CD4-positive, alpha-beta memory T cell (primary cell): ENCODE measurements at regions of chr7 and their contacts with region 1.

Region 1: GRCh38 chr7:155205368-155206317 is 92.0 kb upstream of the INSIG1 start:
- DNase-seq: peak; percentile 88 to 97 (median 90)
- H3K4me3 ChIP-seq: peak overlapping the region; percentile 66 to 89
- H3K4me3 Mint-ChIP-seq: peak overlapping the region; percentile 83 to 93 (median 88)
- H3K27ac ChIP-seq: peak overlapping the region; percentile 77
- H3K27ac Mint-ChIP-seq: peak overlapping the region; percentile 92 to 99 (median 96)
- H3K4me1 ChIP-seq: peaks cover 15% of the 10 kb centered on the region
- H3K4me1 Mint-ChIP-seq: peaks cover 15 to 27% (median 22%) of the 10 kb centered on the region in 4 donors
- H3K27me3 ChIP-seq: no peaks in the 10 kb centered on the region
- H3K27me3 Mint-ChIP-seq: no peaks in the 10 kb centered on the region

Region 2: DNA sequence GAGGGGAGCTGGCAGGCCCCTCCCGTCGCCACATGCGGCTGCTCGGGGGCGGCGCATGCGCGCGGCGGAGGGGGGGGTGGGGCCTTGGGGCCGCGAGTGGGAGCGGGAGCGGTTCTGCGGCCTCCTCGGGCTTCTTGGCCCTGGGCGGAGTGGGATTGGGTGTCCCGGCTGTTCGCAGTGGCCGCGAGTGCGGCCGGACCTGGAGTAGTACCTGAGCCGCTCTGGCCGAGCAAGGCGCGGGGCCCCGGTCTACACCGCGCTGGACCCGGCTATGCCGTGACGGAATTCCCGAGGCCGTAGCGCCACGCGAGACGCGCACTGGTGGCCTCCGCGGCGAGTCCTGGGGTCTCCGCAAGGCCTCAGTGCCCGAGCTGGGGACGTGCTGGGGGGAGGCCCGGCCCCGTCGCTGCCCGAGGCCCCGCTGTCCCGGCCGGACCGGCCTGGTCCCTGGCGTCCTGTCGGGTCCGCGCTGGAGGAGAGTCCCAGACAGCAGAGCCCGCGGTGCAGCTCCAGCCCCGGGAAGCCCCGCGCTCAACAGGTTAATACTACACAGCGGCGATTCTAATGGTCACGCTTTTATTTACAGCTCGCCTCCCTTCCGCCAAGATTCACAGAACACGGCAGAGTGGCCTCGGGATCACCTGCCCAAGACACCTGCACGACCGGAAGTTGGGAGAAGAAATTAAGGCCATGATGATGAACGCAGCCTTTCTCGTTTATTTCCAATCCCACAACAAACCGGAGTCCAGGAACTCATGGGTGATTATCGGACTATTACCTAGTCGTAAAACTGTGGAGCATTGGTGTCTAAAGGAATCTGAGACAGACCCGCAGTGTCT is 202.0 kb before region 1 on chr7:
- CTCF ChIA-PET with region 1: no interaction called
- POLR2A ChIA-PET with region 1: interaction called, 21 read pairs
- intact Hi-C with region 1: loop called (anchors 1 kb)
- DNase-seq: peak; percentile 80 to 92 (median 88)
- H3K4me3 ChIP-seq: peak overlapping the region; percentile 81 to 91
- H3K4me3 Mint-ChIP-seq: peak overlapping the region; percentile 93 to 97 (median 95)
- H3K27ac ChIP-seq: peak overlapping the region; percentile 84
- H3K27ac Mint-ChIP-seq: peak overlapping the region; percentile 38 to 96 (median 95)
- H3K4me1 ChIP-seq: peaks cover 19% of the 10 kb centered on the region
- H3K4me1 Mint-ChIP-seq: peaks cover 8 to 16% (median 12%) of the 10 kb centered on the region in 4 donors
- H3K27me3 ChIP-seq: no peaks in the 10 kb centered on the region
- H3K27me3 Mint-ChIP-seq: no peaks in the 10 kb centered on the region

Region 3: DNA sequence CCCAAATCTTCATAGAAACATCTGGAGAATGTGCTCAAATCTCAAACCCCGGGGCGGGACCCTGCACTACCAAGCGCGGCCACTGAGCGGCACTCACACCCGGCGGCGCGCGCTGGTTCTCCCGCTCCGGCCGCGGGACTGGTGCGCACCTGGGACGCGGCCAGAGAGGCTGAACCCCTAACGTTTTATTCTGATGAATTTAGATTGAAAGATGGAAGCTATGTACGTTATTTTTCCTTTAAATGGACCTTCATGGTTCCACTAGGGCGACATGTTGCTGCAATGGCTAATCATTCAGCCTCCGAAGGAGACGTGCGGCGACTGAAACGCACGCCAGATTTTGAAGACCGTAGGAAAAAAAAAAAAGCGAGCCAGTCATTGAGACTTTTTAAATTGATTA is 15.0 kb before region 1 on chr7:
- CTCF ChIA-PET with region 1: interaction called, 17 read pairs
- POLR2A ChIA-PET with region 1: no interaction called
- intact Hi-C with region 1: no loop called
- DNase-seq: peak in 4 of 5 donors; percentile 36 to 53 (median 40)
- H3K4me3 ChIP-seq: no peak overlapping the region
- H3K4me3 Mint-ChIP-seq: peak overlapping the region in 1 of 8 donors; percentile 26
- H3K27ac ChIP-seq: no peak overlapping the region
- H3K27ac Mint-ChIP-seq: no peak overlapping the region
- H3K4me1 ChIP-seq: no peaks in the 10 kb centered on the region
- H3K4me1 Mint-ChIP-seq: peaks cover 1 to 7% (median 4%) of the 10 kb centered on the region in 4 donors
- H3K27me3 ChIP-seq: no peaks in the 10 kb centered on the region
- H3K27me3 Mint-ChIP-seq: peaks cover 3 to 18% of the 10 kb centered on the region in 2 donors

Region 4: DNA sequence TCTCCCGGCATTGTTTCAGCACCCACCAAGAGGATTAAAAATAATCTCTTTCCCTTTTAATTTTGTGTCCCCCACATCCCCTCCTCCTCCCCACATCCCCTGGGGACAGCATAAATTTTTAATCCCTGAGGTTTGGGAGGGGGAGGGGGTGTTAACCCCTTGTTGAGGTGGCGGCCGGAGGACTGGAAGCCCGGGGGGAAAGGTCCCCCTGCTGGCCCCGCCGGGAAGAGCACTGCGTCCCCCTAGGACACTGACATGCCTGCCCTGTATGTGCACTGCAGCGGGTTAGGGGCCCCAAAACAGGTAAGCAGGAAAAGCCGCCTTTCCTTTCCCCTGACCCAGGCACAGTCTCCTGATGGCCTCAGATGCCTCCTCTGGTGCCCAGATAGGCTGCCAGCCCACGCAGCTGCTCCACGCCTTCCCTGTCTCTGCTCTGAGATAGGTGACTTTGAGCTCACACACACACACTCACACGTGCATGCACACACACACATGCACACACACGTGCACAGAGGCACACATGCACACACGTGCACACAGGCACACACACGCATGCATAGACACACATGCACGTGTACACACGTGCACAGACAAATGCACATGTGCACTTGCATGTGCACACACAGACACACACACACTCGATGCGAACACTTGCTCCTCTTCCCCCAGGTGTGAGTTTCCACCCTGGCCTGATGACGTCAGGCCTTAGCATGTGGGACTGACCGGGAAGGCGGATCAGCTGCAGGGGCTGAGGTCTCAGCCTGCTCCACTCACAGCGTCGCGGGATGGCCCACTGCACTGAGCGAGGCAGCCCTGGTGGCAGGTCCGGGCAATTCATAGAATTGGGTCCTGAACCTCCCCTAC is 328.4 kb after region 1 on chr7:
- CTCF ChIA-PET with region 1: no interaction called
- POLR2A ChIA-PET with region 1: no interaction called
- intact Hi-C with region 1: no loop called
- DNase-seq: no peak
- H3K4me3 ChIP-seq: no peak overlapping the region
- H3K4me3 Mint-ChIP-seq: peak overlapping the region; percentile 48 to 86 (median 75)
- H3K27ac ChIP-seq: no peak overlapping the region
- H3K27ac Mint-ChIP-seq: no peak overlapping the region
- H3K4me1 ChIP-seq: peaks cover 12% of the 10 kb centered on the region
- H3K4me1 Mint-ChIP-seq: peaks cover 9 to 23% (median 15%) of the 10 kb centered on the region in 4 donors
- H3K27me3 ChIP-seq: peaks cover 21% of the 10 kb centered on the region
- H3K27me3 Mint-ChIP-seq: peaks cover 51 to 55% of the 10 kb centered on the region in 2 donors

Region 5: DNA sequence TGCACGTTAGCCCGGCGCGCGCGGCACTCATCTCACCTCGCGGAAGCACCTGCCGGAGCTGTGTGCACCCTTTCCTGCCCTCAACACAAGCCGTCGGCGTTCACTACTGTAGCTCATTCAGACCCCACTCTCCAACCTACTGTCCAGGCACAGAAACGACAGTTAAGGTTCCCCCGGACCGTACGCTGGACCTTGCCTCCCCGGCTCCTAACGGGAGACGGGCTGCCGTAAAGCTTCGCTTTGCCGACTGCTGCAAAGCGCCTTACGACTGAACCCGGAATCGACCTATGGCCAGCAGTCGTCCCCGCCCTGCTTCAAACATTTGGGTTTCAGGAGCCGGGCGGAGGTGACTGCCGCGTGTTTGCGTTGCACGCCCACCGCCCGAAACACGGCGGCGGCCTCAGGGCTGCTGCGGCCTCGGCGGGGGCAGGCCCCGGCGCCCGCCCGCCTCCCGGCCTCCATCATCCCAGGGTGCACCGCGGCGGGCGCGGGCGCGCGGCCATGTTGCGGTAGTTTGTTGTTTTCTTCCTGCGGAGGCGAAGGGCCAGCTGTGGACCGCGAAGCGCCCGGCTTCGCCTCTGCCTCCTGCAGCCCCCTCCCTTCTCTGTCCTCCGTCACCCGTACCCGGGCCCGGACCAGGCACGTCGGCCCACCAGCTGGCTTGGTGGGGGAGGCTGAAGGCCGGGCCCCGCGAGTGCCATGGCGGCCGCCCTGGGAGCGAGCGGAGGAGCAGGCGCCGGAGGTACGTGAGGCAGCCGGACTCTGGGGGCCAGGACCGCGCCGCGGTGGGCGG is 438.7 kb after region 1 on chr7 and contains the start of gene RBM33:
- CTCF ChIA-PET with region 1: no interaction called
- POLR2A ChIA-PET with region 1: interaction called, 5 read pairs
- intact Hi-C with region 1: loop called (anchors 1 kb)
- DNase-seq: peak; percentile 81 to 88 (median 84)
- H3K4me3 ChIP-seq: peak within 1 kb of the TSS; percentile 45 to 92
- H3K4me3 Mint-ChIP-seq: peak within 1 kb of the TSS; percentile 98 to 100 (median 100)
- H3K27ac ChIP-seq: peak within 1 kb of the TSS; percentile 94
- H3K27ac Mint-ChIP-seq: peak within 1 kb of the TSS; percentile 97 to 100 (median 100)
- H3K4me1 ChIP-seq: peaks cover 41% of the 10 kb centered on the region
- H3K4me1 Mint-ChIP-seq: peaks cover 33 to 56% (median 44%) of the 10 kb centered on the region in 4 donors
- H3K27me3 ChIP-seq: no peaks in the 10 kb centered on the region
- H3K27me3 Mint-ChIP-seq: no peaks in the 10 kb centered on the region
- total RNA-seq, gene RBM33: 161 to 167 TPM